Activated naive CD4-positive, alpha-beta T cell treated with anti-CD3 and anti-CD28 coated beads for 36 hours (primary cell): ENCODE measurements at regions of chr19 and their contacts with region 1.

Region 1: GRCh38 chr19:19053508-19054314 is 10.1 kb upstream of the SLC25A42 start:
- DNase-seq: peak; percentile 62
- H3K4me3 Mint-ChIP-seq: no peak overlapping the region
- H3K27ac Mint-ChIP-seq: no peak overlapping the region
- H3K4me1 Mint-ChIP-seq: no peaks in the 10 kb centered on the region
- H3K27me3 Mint-ChIP-seq: no peaks in the 10 kb centered on the region

Region 2: GRCh38 chr19:19110410-19111135 is 56.9 kb after region 1 on chr19:
- CTCF ChIA-PET with region 1: interaction called, 9 read pairs
- intact Hi-C with region 1: loop called (anchors 2 kb)
- DNase-seq: peak; percentile 18
- H3K4me3 Mint-ChIP-seq: no peak overlapping the region
- H3K27ac Mint-ChIP-seq: no peak overlapping the region
- H3K4me1 Mint-ChIP-seq: no peaks in the 10 kb centered on the region
- H3K27me3 Mint-ChIP-seq: no peaks in the 10 kb centered on the region